Heart right ventricle (tissue), 16 donors: ENCODE measurements at regions of chr9 and their contacts with region 1.

Region 1: DNA sequence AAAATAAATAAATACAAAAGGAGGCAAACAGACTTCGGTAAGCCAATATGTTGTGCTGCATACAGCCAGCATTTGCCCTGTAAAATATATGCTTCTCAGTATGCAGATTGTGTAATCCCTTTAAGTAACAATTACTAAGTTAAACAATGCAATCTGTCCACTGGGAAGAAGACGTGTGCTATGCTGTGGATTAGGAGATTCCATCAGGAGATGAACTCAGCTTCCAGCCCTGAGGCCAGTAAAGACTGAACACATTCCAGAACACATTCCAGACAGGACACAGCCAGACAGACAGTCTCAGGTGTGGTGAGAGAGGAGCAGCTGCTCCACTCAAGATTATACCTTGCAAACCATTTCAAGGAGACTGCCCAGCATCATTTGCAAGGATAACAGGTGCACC is 97.8 kb downstream of the MPDZ start:
- DNase-seq: no peak
- ATAC-seq: no peak
- H3K4me3 ChIP-seq: no peak overlapping the region
- H3K27ac ChIP-seq: no peak overlapping the region
- H3K4me1 ChIP-seq: no peaks in the 10 kb centered on the region
- H3K27me3 ChIP-seq: no peaks in the 10 kb centered on the region
- CTCF ChIP-seq: no peak

Region 2: GRCh38 chr9:12368569-12368968 is 813.1 kb before region 1 on chr9:
- intact Hi-C with region 1: loop called in 1 of 10 experiments (anchors 5 kb)
- DNase-seq: no peak
- ATAC-seq: no peak
- H3K4me3 ChIP-seq: no peak overlapping the region
- H3K27ac ChIP-seq: no peak overlapping the region
- H3K4me1 ChIP-seq: no peaks in the 10 kb centered on the region
- H3K27me3 ChIP-seq: no peaks in the 10 kb centered on the region
- CTCF ChIP-seq: no peak

Region 3: DNA sequence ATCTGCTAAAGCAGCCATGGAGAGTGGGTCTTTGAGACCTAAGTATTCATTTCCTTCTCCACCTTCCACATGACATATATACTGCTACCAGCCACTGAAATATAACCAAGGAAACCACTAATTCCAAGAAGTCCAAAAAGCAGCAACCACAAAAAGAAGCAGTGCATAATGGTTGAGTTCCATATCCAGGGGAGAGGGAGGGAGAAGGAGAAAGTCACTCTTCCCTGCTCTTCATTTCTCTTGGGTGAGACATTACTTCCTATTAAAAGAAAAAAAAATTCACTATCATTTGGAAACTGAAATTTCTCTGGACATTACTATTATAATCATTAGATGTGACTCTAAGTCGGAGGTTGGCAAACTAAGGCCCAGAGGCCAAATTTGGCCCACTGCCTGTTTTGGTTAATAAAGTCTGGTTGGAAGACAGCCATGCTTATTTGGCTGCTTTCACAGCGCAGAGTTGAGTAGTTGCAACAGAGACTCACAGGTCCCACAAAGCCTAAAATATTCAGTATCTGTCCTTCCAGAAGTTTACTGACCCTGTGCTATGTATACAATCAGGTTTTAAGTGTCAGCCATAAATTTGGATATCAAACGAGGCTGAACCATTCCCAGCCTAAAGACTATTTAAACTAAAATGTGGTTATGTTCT is 70.8 kb before region 1 on chr9:
- intact Hi-C with region 1: loop called in 1 of 10 experiments (anchors 10 kb)
- DNase-seq: peak; percentile 18 to 30
- ATAC-seq: peak in 5 of 8 donors; percentile 49 to 59 (median 51)
- H3K4me3 ChIP-seq: no peak overlapping the region
- H3K27ac ChIP-seq: no peak overlapping the region
- H3K4me1 ChIP-seq: peaks cover 0 to 11% (median 5%) of the 10 kb centered on the region in 9 donors
- H3K27me3 ChIP-seq: no peaks in the 10 kb centered on the region
- CTCF ChIP-seq: no peak

Region 4: DNA sequence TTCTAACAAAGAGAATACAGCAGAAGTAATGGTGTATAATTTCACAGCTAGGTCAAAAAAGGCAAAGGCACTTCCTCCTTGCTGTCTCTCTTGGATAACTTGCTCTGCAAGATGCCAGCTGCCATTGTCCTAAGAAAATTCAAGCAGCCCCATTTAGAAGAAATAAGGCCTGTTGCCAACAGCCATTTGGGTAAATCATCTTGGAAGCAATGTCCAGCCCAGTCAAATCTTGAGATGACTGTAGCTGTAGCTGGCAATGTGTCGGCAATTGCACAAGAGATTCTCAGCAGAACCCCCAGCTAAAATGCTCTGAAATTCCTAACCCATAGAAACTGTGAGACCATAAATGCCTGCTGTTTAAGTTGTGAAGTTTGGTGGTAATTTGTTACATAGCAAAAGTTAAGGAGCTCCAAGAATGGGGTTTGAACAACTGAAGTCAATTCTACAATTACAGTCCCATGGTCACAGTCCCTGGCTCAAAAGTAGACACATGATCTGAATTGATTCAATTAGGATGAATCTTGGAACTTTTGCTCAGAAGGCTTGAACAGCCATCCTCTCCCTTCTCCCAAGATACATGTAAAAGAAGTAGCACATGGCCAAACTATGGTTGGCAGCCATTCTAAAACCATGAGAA is 53.3 kb before region 1 on chr9:
- intact Hi-C with region 1: loop called in 2 of 10 experiments (anchors 10 kb)
- DNase-seq: no peak
- ATAC-seq: no peak
- H3K4me3 ChIP-seq: no peak overlapping the region
- H3K27ac ChIP-seq: no peak overlapping the region
- H3K4me1 ChIP-seq: no peaks in the 10 kb centered on the region
- H3K27me3 ChIP-seq: no peaks in the 10 kb centered on the region
- CTCF ChIP-seq: no peak

Region 5: DNA sequence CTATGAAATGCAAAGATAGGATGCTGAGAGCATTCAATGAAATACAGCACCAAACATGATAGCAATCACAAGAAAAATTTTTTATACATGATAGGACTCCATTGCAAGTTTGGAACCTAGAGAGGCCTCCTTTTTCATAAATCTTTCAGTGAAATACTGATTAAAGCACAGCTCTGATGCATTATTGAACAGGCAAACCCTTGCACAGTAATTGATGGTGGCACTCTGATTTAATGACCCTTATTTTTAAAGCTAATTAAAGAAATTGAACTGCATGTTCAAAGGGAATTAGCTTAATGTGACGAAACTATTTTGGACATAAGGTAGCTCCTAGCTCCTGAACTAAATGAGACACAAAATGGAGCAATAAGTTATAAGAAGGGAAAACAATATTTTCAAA is 53.3 kb after region 1 on chr9:
- intact Hi-C with region 1: loop called in 1 of 10 experiments (anchors 10 kb)
- DNase-seq: no peak
- ATAC-seq: no peak
- H3K4me3 ChIP-seq: no peak overlapping the region
- H3K27ac ChIP-seq: no peak overlapping the region
- H3K4me1 ChIP-seq: no peaks in the 10 kb centered on the region
- H3K27me3 ChIP-seq: no peaks in the 10 kb centered on the region
- CTCF ChIP-seq: no peak

Region 6: DNA sequence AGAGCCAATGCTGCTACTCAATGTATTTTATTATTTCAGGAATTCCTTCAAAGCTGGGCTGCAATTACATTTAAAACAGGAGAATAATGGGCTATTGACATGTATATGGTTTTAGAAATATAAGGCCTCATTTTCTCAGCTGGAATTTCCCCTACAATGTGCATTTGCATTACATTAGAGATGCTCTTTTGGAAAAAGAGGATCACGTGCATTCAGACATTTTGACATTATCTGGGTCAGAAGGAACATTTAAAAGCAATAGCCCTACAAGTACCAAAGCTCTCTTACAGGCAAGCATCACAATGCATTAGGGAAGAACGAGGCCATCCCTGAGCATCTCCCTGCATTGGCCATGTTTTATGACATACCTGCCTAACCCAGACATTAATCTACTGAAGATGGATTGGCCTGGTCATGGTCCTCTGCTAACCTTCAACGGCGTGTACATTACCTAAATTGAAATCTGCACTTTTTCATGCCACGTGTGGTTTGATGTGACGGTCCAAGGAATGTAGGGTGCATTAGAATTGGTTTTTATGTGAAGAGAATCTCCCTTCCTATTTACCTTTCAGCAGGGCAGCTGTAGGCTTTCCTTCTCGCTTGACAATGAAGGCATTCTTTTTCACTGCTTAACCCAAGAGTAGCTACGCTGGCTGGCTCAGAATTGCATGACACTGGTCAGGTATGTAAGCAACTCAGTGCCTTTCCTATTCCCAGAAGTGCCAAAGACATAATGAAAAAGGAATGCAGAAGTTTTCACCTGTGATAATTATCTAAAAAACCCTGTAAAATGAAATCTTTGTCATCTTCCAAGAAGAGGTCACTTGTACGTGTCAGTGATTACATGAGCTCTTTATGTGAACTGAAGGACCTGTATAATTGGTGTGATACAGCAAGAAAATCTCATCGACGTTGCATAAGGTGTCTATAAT is 310.1 kb after region 1 on chr9:
- intact Hi-C with region 1: no loop called
- DNase-seq: no peak
- ATAC-seq: no peak
- H3K4me3 ChIP-seq: no peak overlapping the region
- H3K27ac ChIP-seq: peak overlapping the region in 1 of 10 donors; percentile 37
- H3K4me1 ChIP-seq: peaks cover 0 to 14% (median 4%) of the 10 kb centered on the region in 9 donors
- H3K27me3 ChIP-seq: no peaks in the 10 kb centered on the region
- CTCF ChIP-seq: no peak